Activated T-helper 1 cell treated with anti-CD3 and anti-CD28 coated beads, Interleukin-12 subunit alpha, Interleukin-12 subunit beta, Interleukin-2, Interleukin-4 antibody, amounts not matched to agents 30 ng/mL and 10 ng/mL and 1 ng/mL, durations not matched to agents 14 hours and 24 hours and 36 hours (primary cell): ENCODE measurements at regions of chr1 and their contacts with region 1.

Region 1: GRCh38 chr1:6423321-6423999 is 1.1 kb upstream of the ESPN start:
- DNase-seq: peak; percentile 56
- H3K4me3 Mint-ChIP-seq: peak overlapping the region; percentile 42
- H3K27ac Mint-ChIP-seq: no peak overlapping the region
- H3K4me1 Mint-ChIP-seq: peaks cover 14% of the 10 kb centered on the region
- H3K27me3 Mint-ChIP-seq: peaks cover 54% of the 10 kb centered on the region

Region 2: DNA sequence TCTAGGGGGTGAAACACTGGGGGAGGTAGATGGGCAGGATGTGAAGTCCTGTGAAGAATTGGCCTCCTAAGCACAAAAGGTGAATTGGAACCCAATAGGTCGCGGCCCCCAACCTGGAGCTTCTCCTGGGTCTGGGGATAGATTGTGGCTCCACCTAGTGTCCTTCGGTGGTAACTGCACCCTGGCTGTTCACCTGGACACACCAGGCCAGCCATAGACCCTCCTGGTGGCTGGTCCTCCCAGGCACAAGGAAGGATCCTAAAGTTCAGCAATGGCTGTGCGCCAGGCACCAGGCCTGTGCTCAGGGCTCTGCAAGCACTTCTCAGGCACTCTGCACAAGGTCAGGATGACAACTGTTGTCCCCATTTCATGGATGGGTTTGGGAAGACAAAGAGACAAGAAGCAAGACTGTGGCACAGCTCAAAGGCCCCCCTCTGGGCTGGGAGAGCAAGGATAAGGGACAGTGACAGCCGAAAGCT is 14.6 kb after region 1 on chr1:
- intact Hi-C with region 1: loop called (anchors 1 kb)
- DNase-seq: peak; percentile 61
- H3K4me3 Mint-ChIP-seq: no peak overlapping the region
- H3K27ac Mint-ChIP-seq: no peak overlapping the region
- H3K4me1 Mint-ChIP-seq: peaks cover 5% of the 10 kb centered on the region
- H3K27me3 Mint-ChIP-seq: peaks cover 46% of the 10 kb centered on the region

Region 3: DNA sequence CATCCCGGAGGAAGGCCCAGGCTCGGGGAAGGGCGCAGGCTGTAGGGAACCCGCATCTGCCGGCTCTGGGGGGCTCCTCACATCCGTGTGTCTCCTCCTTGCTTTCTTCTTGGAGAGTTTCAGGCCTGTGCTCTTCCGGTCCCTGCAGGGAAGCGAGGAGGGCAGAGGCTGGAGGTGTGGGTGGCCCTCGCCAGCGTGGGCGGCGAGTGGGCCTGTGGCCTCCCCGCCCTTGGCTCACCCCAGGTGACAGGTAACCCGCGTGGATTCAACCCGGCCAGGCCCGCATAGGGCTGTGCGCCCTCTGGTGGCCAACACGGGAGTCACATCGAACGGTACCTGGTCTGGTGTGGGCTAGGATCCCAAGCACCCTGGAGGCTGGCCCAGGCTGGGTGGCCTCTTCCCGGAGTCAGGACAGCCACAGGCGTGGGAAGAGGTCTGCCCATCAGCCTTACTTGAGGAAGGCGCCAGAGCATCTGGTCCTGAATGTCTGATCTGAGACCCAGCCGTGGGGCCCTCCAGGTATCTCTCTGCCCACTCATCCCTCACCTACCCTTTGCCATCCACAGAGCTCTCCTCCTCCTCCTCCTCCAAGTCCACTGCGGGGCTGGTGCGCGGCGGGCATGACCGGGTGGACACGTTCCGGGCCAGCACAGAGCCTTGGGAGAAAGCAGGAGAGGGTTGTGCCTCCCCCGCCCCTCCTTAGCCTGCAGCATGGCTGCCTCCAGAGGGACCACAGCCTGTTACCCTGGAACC is 52.1 kb after region 1 on chr1:
- intact Hi-C with region 1: loop called (anchors 1 kb)
- DNase-seq: peak; percentile 70
- H3K4me3 Mint-ChIP-seq: no peak overlapping the region
- H3K27ac Mint-ChIP-seq: no peak overlapping the region
- H3K4me1 Mint-ChIP-seq: no peaks in the 10 kb centered on the region
- H3K27me3 Mint-ChIP-seq: no peaks in the 10 kb centered on the region